Endothelial cell of umbilical vein (primary cell): ENCODE measurements at regions of chr20 and their contacts with region 1.

Region 1: DNA sequence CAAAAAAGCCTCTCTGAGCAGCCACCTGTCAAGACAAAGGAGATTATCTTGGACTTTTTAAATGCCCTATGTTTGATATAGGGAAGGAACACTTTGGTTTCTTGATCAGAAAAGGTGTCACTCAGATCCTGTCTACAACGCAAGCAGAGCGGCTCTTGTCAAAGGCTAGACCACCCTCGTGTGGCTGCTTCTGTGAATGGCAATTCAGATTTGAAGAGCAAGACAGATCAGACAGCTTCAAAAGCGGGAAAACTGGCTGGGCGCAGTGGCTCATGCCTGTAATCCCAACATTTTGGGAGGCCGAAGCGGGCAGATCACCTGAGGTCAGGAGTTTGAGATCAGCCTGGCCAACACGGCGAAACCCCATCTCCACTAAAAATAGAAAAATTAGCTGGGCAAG is 10.1 kb upstream of the NXT1 start:
- DNase-seq: peak; percentile 84
- H3K4me3 ChIP-seq: no peak overlapping the region
- H3K27ac ChIP-seq: no peak overlapping the region
- H3K4me1 ChIP-seq: no peaks in the 10 kb centered on the region
- H3K27me3 ChIP-seq: peaks cover 2 to 3% of the 10 kb centered on the region in 2 experiments
- CTCF ChIP-seq: peak; percentile 64 to 71
- POLR2A ChIP-seq: no peak

Region 2: GRCh38 chr20:22684072-22684762 is 656.3 kb before region 1 on chr20:
- CTCF ChIA-PET with region 1: interaction called, 222 read pairs
- POLR2A ChIA-PET with region 1: no interaction called
- dilution Hi-C with region 1: no loop called
- intact Hi-C with region 1: no loop called
- DNase-seq: peak; percentile 76
- H3K4me3 ChIP-seq: no peak overlapping the region
- H3K27ac ChIP-seq: no peak overlapping the region
- H3K4me1 ChIP-seq: peaks cover 20% of the 10 kb centered on the region
- H3K27me3 ChIP-seq: peaks cover 10% of the 10 kb centered on the region in 2 experiments
- CTCF ChIP-seq: peak; percentile 78 to 89
- POLR2A ChIP-seq: no peak

Region 3: DNA sequence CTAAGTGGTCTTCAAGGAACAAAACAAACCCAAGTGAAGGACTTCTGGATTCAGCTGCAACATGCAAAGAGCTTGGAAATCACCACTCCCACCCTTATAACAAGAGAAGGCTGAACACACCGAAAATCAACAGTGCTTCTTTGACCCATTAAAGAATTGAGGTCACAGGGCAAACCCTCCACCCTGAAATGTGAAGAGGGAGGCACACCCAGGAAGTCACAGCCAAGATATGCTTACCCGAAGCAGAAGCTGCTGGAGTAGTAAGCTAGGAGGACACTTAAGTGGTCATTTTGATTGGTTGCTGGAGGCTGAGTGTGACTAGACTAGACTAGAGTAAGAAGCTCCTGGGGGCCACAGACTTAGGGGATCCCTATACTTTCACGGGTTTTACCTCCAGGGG is 493.7 kb before region 1 on chr20:
- CTCF ChIA-PET with region 1: interaction called, 23 read pairs
- POLR2A ChIA-PET with region 1: no interaction called
- dilution Hi-C with region 1: no loop called
- intact Hi-C with region 1: no loop called
- DNase-seq: no peak
- H3K4me3 ChIP-seq: no peak overlapping the region
- H3K27ac ChIP-seq: no peak overlapping the region
- H3K4me1 ChIP-seq: peaks cover 4% of the 10 kb centered on the region
- H3K27me3 ChIP-seq: peaks cover 1 to 5% of the 10 kb centered on the region in 2 experiments
- CTCF ChIP-seq: no peak
- POLR2A ChIP-seq: no peak

Region 4: DNA sequence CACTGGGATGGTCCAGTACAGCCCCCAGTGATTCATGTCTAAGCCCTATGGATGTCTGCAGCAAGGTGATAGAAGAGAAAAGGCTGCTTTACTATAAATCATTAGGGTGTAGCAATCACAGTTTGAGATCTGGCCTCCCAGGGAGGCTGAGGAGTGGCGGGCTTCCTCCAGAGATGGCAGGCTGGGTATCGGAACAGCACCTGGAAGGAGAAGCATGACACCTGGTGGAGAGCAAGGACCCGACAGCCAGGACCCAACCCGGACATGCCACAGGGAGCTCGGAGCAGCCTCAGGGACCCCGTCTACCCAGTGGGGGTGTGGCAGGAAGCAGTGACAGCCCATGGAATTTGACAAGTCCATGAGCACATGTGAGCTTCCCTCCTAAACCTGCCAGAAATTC is 139.6 kb before region 1 on chr20:
- CTCF ChIA-PET with region 1: interaction called, 18 read pairs
- POLR2A ChIA-PET with region 1: no interaction called
- dilution Hi-C with region 1: no loop called
- intact Hi-C with region 1: no loop called
- DNase-seq: no peak
- H3K4me3 ChIP-seq: no peak overlapping the region
- H3K27ac ChIP-seq: no peak overlapping the region
- H3K4me1 ChIP-seq: no peaks in the 10 kb centered on the region
- H3K27me3 ChIP-seq: no peaks in the 10 kb centered on the region
- CTCF ChIP-seq: peak; percentile 42 to 54
- POLR2A ChIP-seq: no peak

Region 5: GRCh38 chr20:23257848-23258746 is 82.4 kb before region 1 on chr20:
- CTCF ChIA-PET with region 1: interaction called, 20 read pairs
- POLR2A ChIA-PET with region 1: no interaction called
- dilution Hi-C with region 1: no loop called
- intact Hi-C with region 1: no loop called
- DNase-seq: peak; percentile 97
- H3K4me3 ChIP-seq: no peak overlapping the region
- H3K27ac ChIP-seq: peak overlapping the region; percentile 98
- H3K4me1 ChIP-seq: peaks cover 39% of the 10 kb centered on the region
- H3K27me3 ChIP-seq: no peaks in the 10 kb centered on the region
- CTCF ChIP-seq: no peak
- POLR2A ChIP-seq: peak; percentile 25